Upper lobe of right lung (tissue), 1 donor: ENCODE measurements at regions of chr1 and their contacts with region 1.

Region 1: DNA sequence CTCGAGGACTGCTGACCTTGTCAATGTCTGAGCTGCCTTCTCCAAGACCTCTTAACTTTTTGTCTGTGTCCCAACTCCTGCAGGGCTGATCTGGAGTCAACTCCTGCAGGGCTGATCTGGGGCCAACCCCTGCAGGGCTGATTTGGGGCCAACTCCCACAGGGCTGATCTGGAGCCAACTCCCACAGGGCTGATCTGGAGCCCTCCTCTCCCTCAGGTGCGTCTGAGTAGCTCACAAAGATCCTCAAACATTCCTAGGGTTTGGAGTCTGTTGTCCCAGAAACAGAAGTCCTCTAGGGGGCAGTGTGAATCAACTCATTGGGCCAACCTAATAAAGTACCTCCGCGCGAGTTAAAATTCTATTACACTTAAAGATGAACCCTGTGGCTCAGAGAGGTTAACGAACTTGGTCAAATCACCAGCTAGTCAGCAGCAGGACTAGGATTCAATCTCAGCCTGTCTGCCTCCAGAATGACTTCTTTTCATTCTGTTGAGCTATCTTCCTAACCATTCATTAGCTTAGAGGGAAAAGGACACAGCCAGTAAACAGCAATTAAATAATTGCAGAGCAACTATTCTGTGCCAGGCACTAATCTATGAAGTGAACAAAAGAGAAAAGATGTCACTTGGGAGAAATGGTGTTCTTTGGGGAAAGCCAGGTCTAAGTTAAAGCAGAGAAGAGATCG is 17.2 kb upstream of the RLF start:
- DNase-seq: no peak
- ATAC-seq: peak; percentile 94
- H3K4me3 ChIP-seq: no peak overlapping the region
- H3K27ac ChIP-seq: no peak overlapping the region
- H3K4me1 ChIP-seq: no peaks in the 10 kb centered on the region
- H3K27me3 ChIP-seq: peaks cover 7% of the 10 kb centered on the region
- CTCF ChIP-seq: peak; percentile 78

Region 2: DNA sequence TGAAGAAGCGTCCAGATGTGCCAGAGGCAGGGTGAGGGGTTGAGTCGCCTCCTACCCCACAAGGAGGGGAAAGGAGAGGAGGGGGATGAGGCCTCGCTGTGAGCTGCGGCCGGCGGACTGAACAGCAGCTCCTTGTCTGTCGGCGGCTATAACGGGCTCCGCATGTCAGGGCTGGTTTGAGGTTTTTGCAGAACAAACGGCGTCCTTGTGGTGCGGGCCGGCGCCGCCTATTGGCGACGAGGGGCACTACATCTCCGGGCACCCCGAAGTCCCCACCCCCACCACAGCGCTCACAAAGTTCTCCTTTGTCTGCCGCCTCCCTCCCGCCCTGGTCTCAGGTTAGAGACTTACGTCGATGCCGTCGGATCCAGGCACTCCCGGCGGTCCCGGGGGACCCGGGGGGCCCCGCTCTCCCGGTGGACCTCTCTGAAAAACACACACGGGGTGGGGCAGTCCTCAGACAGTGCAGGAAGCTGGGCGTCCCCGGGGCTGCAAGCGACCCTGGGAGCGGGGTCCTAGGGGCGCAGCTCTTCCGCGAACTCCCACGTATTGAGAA is 171.3 kb after region 1 on chr1:
- intact Hi-C with region 1: loop called (anchors 10 kb)
- DNase-seq: peak; percentile 88
- ATAC-seq: peak; percentile 93
- H3K4me3 ChIP-seq: peak overlapping the region; percentile 49
- H3K27ac ChIP-seq: peak overlapping the region; percentile 36
- H3K4me1 ChIP-seq: peaks cover 18% of the 10 kb centered on the region
- H3K27me3 ChIP-seq: peaks cover 25% of the 10 kb centered on the region
- CTCF ChIP-seq: peak; percentile 96

Region 3: DNA sequence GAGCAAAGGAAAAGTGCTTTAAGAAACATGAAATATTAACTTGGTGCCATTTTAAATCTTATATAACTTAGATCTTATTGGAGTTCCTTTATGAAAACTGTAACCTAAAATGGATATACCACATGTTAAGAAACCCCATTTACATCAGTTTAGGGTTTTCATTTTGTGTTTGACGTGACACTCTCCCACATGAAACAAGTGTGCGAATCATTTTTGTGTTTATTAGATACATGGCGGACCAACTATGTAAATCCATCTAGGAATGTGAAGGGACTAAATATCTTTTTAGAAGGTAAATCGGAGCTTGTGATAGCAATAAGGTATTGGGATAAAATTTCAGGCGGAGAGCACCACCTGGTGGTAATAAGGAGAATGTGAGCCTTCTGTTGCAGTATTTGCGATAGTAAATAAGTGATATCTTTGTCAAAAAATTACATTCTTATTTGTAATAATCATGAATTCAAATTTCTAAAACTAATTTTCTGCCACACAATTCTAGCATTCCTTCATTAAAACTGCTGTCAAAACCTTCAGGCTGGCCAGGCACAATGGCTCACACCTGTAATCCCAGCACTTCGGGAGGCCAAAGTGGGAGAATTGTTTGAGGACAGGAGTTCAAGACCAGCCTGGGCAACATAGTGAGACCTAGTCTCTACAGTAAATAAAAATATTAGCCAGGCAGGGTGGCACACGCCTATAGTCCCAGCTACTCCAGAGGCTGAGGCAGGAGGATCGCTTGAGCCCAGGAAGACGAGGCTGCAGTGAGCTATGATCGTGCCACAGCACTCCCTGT is 260.8 kb after region 1 on chr1:
- intact Hi-C with region 1: loop called (anchors 10 kb)
- DNase-seq: no peak
- ATAC-seq: peak; percentile 81
- H3K4me3 ChIP-seq: peak overlapping the region; percentile 3
- H3K27ac ChIP-seq: no peak overlapping the region
- H3K4me1 ChIP-seq: peaks cover 10% of the 10 kb centered on the region
- H3K27me3 ChIP-seq: no peaks in the 10 kb centered on the region
- CTCF ChIP-seq: peak; percentile 88

Region 4: DNA sequence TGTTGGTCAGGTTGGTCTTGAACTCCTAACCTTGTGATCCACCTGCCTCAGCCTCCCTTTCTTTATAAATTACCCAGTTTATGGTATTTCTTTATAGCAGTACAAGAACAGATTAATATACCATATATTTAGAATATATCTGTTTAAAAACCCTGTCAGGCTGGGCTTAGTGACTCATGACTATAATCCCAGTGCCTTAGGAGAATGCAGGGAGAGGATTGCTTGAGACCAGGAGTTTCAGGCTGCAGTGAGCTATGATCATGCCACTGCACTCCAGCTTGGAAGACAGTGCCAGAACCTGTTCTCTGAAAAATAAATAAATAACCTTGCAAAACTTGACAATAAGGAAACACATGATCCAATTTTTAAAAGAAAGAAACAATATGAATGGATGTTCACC is 431.3 kb after region 1 on chr1:
- intact Hi-C with region 1: no loop called
- DNase-seq: no peak
- ATAC-seq: no peak
- H3K4me3 ChIP-seq: no peak overlapping the region
- H3K27ac ChIP-seq: no peak overlapping the region
- H3K4me1 ChIP-seq: no peaks in the 10 kb centered on the region
- H3K27me3 ChIP-seq: no peaks in the 10 kb centered on the region
- CTCF ChIP-seq: no peak